ENCODE measurements at regions of chr1 and their contacts with region 1.

Region 1: GRCh38 chr1:193856261-193856660 is 669.8 kb upstream of the B3GALT2 start:
- DNase-seq: no peak
- H3K4me3 ChIP-seq: no peak overlapping the region
- CTCF ChIP-seq: no peak
- POLR2A ChIP-seq: no peak

Region 2: DNA sequence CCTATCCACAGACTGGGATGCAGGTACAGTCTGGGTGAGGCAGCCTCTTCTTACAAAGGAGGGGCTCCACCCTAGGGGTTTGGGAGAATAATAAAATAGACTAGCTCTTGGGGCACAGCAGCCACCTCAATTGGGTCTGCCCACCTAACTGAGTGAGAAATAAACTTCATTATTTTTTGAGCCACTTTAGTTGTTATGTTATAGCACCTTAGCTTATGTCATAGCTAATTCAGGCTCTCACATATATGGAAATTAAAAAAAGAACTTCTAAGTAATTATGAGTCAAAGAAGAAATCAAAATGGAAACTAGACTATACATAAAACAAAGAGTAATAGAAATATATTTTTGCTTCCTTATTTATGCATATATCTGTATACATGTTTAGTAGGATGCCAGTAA is 351.3 kb before region 1 on chr1:
- intact Hi-C with region 1: loop called (anchors 5 kb)
- DNase-seq: no peak
- H3K4me3 ChIP-seq: no peak overlapping the region
- CTCF ChIP-seq: no peak
- POLR2A ChIP-seq: no peak

Region 3: GRCh38 chr1:193937311-193937710 is 81.0 kb after region 1 on chr1:
- intact Hi-C with region 1: no loop called
- DNase-seq: no peak
- H3K4me3 ChIP-seq: no peak overlapping the region
- CTCF ChIP-seq: no peak
- POLR2A ChIP-seq: no peak

Measured in lower leg skin (tissue), 4 donors.